CD8-positive, alpha-beta T cell (primary cell): ENCODE measurements at regions of chr5 and their contacts with region 1.

Region 1: GRCh38 chr5:132820162-132820754 is 7.2 kb downstream of the SOWAHA start:
- DNase-seq: peak; percentile 74 to 93 (median 87)
- ATAC-seq: peak; percentile 85
- H3K4me3 ChIP-seq: peak overlapping the region in 1 of 2 experiments; percentile 35
- H3K4me3 Mint-ChIP-seq: peak overlapping the region; percentile 40
- H3K27ac ChIP-seq: no peak overlapping the region
- H3K27ac Mint-ChIP-seq: no peak overlapping the region
- H3K4me1 ChIP-seq: peaks cover 16% of the 10 kb centered on the region
- H3K4me1 Mint-ChIP-seq: peaks cover 11% of the 10 kb centered on the region
- H3K27me3 ChIP-seq: peaks cover 10 to 14% of the 10 kb centered on the region in 2 experiments
- H3K27me3 Mint-ChIP-seq: peaks cover 36% of the 10 kb centered on the region
- CTCF ChIP-seq: peak; percentile 89

Region 2: DNA sequence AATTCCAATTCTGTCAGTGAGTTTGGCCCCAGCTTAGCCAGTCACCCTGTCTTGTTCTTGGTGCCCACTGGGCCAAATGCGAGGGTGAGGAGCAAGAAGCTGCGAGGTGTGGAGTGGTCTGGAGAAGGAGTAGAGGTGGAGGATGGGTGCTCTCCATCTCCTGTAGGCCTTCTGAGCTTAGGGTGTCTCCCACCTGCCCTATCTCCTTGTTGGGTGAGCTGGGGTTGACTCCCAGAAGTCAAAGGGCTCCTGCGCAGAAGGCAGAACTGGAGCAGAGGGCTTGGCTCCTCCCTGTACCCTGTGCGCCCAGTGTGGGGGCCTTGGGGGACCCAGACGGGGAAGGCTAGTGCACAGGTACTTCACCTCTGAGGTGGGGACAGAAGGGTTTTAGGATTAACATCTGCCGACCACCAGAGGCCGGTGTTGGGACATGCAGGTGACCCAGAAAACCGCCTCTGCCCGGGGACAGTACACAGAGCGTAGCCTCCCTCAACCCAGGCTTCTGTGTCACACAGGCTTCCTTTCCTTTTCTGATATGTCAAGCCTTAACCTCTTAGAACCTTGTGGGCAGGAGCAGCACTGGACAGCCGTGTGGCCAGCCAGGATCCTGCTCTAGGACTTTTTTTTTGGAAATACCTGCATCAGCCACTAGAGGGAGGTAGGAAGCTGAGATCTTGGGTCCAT is 293.8 kb before region 1 on chr5:
- CTCF ChIA-PET with region 1: interaction called, 40 read pairs
- POLR2A ChIA-PET with region 1: no interaction called
- intact Hi-C with region 1: loop called in 1 of 2 experiments (anchors 1 kb)
- DNase-seq: peak in 6 of 9 experiments; percentile 24 to 69 (median 49)
- ATAC-seq: peak; percentile 72
- H3K4me3 ChIP-seq: no peak overlapping the region
- H3K4me3 Mint-ChIP-seq: no peak overlapping the region
- H3K27ac ChIP-seq: no peak overlapping the region
- H3K27ac Mint-ChIP-seq: no peak overlapping the region
- H3K4me1 ChIP-seq: peaks cover 8% of the 10 kb centered on the region
- H3K4me1 Mint-ChIP-seq: peaks cover 9% of the 10 kb centered on the region
- H3K27me3 ChIP-seq: no peaks in the 10 kb centered on the region
- H3K27me3 Mint-ChIP-seq: no peaks in the 10 kb centered on the region
- CTCF ChIP-seq: peak; percentile 97

Region 3: DNA sequence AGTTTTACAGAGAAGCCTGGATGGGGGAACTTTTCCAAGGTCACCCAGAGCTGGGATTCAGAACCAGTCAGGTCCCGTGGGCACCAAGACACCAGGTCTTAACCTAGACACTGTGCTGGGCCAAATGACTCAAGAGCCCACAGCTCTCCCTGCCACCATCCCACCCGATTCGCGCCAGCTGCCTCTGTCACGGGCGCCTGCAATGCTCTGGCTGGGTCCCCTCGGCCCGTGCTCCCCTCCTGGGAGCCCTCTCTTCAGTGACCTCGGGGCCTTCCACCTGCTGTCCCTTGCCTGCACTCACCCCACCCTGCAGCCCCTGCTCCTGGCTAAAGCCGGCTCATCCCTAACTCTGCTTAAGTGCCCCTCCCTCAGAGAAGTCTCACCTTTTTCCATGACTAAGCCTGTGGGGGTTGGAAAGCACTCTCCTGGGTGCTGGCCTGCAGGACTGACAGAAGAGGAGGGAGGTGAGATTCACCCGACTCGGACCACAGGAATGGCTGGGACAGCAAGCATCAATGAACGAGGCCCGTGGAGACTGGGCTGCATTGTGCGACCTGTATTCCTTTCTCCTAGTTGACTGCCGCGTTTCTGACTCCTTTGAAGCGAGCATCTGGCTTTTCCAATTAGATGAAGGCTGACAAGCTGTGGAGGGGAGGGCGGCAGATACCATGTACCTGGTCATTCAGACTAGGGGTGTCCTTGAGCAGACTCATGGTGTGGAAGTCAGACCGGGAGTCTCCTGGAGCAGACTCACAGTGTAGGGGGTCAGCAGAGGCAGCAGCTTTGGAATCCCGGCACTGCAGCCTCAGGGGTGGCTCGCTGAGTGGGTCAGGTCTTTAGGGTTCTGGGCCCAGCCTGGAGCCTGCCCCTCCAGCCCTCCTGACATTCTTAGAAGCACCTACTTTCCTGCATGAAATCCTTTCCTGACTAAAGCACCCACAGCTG is 152.2 kb before region 1 on chr5:
- CTCF ChIA-PET with region 1: no interaction called
- POLR2A ChIA-PET with region 1: no interaction called
- intact Hi-C with region 1: no loop called
- DNase-seq: peak in 1 of 9 experiments; percentile 31
- ATAC-seq: no peak
- H3K4me3 ChIP-seq: no peak overlapping the region
- H3K4me3 Mint-ChIP-seq: no peak overlapping the region
- H3K27ac ChIP-seq: no peak overlapping the region
- H3K27ac Mint-ChIP-seq: no peak overlapping the region
- H3K4me1 ChIP-seq: peaks cover 7% of the 10 kb centered on the region
- H3K4me1 Mint-ChIP-seq: peaks cover 13% of the 10 kb centered on the region
- H3K27me3 ChIP-seq: no peaks in the 10 kb centered on the region
- H3K27me3 Mint-ChIP-seq: no peaks in the 10 kb centered on the region
- CTCF ChIP-seq: no peak

Region 4: GRCh38 chr5:132753135-132753987 is 66.9 kb before region 1 on chr5:
- CTCF ChIA-PET with region 1: interaction called, 12 read pairs
- POLR2A ChIA-PET with region 1: no interaction called
- intact Hi-C with region 1: no loop called
- DNase-seq: no peak
- ATAC-seq: no peak
- H3K4me3 ChIP-seq: no peak overlapping the region
- H3K4me3 Mint-ChIP-seq: no peak overlapping the region
- H3K27ac ChIP-seq: no peak overlapping the region
- H3K27ac Mint-ChIP-seq: peak overlapping the region; percentile 34
- H3K4me1 ChIP-seq: peaks cover 2% of the 10 kb centered on the region
- H3K4me1 Mint-ChIP-seq: peaks cover 6% of the 10 kb centered on the region
- H3K27me3 ChIP-seq: no peaks in the 10 kb centered on the region
- H3K27me3 Mint-ChIP-seq: no peaks in the 10 kb centered on the region
- CTCF ChIP-seq: no peak

Region 5: DNA sequence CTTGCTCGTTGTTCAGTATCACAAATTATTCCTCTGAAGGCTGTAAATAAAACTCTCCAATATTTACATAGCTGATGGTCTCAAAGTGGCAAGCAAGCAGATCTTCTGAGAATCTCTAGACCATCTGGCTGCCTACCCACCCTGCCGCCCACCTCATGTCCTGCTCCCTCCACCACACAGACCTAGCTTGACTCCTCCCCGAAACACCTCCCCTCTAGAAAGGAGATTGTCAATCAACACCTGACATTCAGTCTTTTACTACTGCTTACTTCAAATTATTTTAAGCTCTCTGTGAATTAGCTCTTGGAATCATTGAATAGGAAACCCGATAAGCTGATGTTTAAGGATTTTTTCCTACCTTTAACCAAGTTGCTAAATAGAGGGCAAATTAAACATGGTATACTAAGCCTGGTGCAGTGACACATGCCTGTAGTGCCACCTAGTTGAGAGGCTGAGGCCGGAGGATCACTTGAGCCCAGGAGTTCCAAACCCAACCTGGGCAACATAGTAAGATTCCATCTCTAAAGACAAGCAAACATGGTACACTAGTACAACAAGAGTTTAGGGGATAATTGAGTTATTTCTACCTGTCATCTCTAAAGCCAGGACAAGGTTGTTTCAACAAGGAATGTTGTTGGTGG is 18.1 kb before region 1 on chr5:
- CTCF ChIA-PET with region 1: interaction called, 55 read pairs
- POLR2A ChIA-PET with region 1: no interaction called
- intact Hi-C with region 1: no loop called
- DNase-seq: no peak
- ATAC-seq: no peak
- H3K4me3 ChIP-seq: no peak overlapping the region
- H3K4me3 Mint-ChIP-seq: no peak overlapping the region
- H3K27ac ChIP-seq: no peak overlapping the region
- H3K27ac Mint-ChIP-seq: no peak overlapping the region
- H3K4me1 ChIP-seq: no peaks in the 10 kb centered on the region
- H3K4me1 Mint-ChIP-seq: no peaks in the 10 kb centered on the region
- H3K27me3 ChIP-seq: no peaks in the 10 kb centered on the region
- H3K27me3 Mint-ChIP-seq: peaks cover 43% of the 10 kb centered on the region
- CTCF ChIP-seq: no peak

Region 6: DNA sequence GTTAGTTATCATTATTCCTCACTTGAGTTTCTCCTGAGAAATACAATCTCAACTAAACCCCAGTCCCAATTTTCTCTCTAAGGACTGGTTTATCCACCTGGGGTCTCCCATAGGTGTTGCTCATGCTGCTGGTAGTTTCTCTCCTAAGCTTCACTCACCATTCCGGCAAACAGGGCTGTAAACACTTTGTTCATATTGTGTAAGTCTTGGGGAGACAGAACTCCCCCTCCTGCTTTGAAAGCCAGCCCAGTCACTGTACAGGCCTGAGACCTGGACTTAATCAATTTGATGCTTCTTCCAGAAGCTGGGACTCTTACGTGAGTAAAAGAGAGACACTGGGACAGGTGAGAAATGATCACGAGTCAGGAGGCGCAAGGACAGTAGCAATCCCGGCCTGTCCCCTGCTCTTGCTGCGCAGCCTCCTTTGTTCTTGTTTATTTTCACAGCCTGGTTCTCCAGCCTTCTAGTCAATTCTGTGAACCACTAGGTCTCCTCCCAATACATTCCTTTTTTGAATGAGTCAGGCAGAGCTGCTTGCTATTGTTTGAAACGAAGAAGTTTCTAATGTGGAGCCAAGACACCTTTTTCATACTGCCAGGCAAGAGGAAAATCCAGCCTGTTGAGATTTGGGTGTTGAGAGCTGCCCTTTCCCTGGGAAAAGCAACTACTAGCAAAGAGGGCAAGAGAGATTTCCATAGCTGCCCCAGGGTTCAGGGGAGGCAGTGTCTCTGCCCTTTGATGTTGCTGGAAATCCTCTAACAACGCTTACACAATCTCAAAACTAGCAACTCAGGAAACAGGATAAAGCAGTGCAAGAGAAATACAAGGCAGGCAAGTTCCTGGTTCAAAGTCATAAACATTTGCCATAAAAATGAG is 19.4 kb after region 1 on chr5:
- CTCF ChIA-PET with region 1: interaction called, 19 read pairs
- POLR2A ChIA-PET with region 1: no interaction called
- intact Hi-C with region 1: no loop called
- DNase-seq: no peak
- ATAC-seq: no peak
- H3K4me3 ChIP-seq: no peak overlapping the region
- H3K4me3 Mint-ChIP-seq: no peak overlapping the region
- H3K27ac ChIP-seq: no peak overlapping the region
- H3K27ac Mint-ChIP-seq: no peak overlapping the region
- H3K4me1 ChIP-seq: no peaks in the 10 kb centered on the region
- H3K4me1 Mint-ChIP-seq: no peaks in the 10 kb centered on the region
- H3K27me3 ChIP-seq: no peaks in the 10 kb centered on the region
- H3K27me3 Mint-ChIP-seq: no peaks in the 10 kb centered on the region
- CTCF ChIP-seq: no peak